B cell (primary cell): ENCODE measurements at regions of chr12 and their contacts with region 1.

Region 1: GRCh38 chr12:14284184-14284722 is 81.2 kb upstream of the ATF7IP start:
- DNase-seq: peak; percentile 51
- ATAC-seq: peak; percentile 40
- H3K4me3 ChIP-seq: peak overlapping the region in 1 of 5 experiments; percentile 25
- H3K4me3 Mint-ChIP-seq: peak overlapping the region; percentile 79
- H3K27ac ChIP-seq: peak overlapping the region; percentile 92 to 95
- H3K27ac Mint-ChIP-seq: peak overlapping the region; percentile 97
- H3K4me1 ChIP-seq: peaks cover 39 to 64% of the 10 kb centered on the region in 2 donors
- H3K4me1 Mint-ChIP-seq: peaks cover 48% of the 10 kb centered on the region
- H3K27me3 ChIP-seq: no peaks in the 10 kb centered on the region
- H3K27me3 Mint-ChIP-seq: no peaks in the 10 kb centered on the region
- CTCF ChIP-seq: no peak

Region 2: GRCh38 chr12:14207905-14208551 is 76.2 kb before region 1 on chr12:
- CTCF ChIA-PET with region 1: no interaction called
- POLR2A ChIA-PET with region 1: interaction called, 10 read pairs
- intact Hi-C with region 1: no loop called
- DNase-seq: no peak
- ATAC-seq: no peak
- H3K4me3 ChIP-seq: no peak overlapping the region
- H3K4me3 Mint-ChIP-seq: no peak overlapping the region
- H3K27ac ChIP-seq: no peak overlapping the region
- H3K27ac Mint-ChIP-seq: no peak overlapping the region
- H3K4me1 ChIP-seq: no peaks in the 10 kb centered on the region
- H3K4me1 Mint-ChIP-seq: no peaks in the 10 kb centered on the region
- H3K27me3 ChIP-seq: no peaks in the 10 kb centered on the region
- H3K27me3 Mint-ChIP-seq: no peaks in the 10 kb centered on the region
- CTCF ChIP-seq: no peak

Region 3: GRCh38 chr12:14225064-14225463 is 59.2 kb before region 1 on chr12:
- CTCF ChIA-PET with region 1: no interaction called
- POLR2A ChIA-PET with region 1: no interaction called
- intact Hi-C with region 1: no loop called
- DNase-seq: no peak
- ATAC-seq: no peak
- H3K4me3 ChIP-seq: no peak overlapping the region
- H3K4me3 Mint-ChIP-seq: no peak overlapping the region
- H3K27ac ChIP-seq: no peak overlapping the region
- H3K27ac Mint-ChIP-seq: no peak overlapping the region
- H3K4me1 ChIP-seq: peaks cover 0 to 5% of the 10 kb centered on the region in 2 donors
- H3K4me1 Mint-ChIP-seq: peaks cover 8% of the 10 kb centered on the region
- H3K27me3 ChIP-seq: no peaks in the 10 kb centered on the region
- H3K27me3 Mint-ChIP-seq: no peaks in the 10 kb centered on the region
- CTCF ChIP-seq: no peak

Region 4: GRCh38 chr12:14249368-14249767 is 34.9 kb before region 1 on chr12:
- CTCF ChIA-PET with region 1: interaction called, 4 read pairs
- POLR2A ChIA-PET with region 1: interaction called, 12 read pairs
- intact Hi-C with region 1: no loop called
- DNase-seq: no peak
- ATAC-seq: no peak
- H3K4me3 ChIP-seq: no peak overlapping the region
- H3K4me3 Mint-ChIP-seq: no peak overlapping the region
- H3K27ac ChIP-seq: no peak overlapping the region
- H3K27ac Mint-ChIP-seq: no peak overlapping the region
- H3K4me1 ChIP-seq: peaks cover 18 to 28% of the 10 kb centered on the region in 2 donors
- H3K4me1 Mint-ChIP-seq: peaks cover 25% of the 10 kb centered on the region
- H3K27me3 ChIP-seq: no peaks in the 10 kb centered on the region
- H3K27me3 Mint-ChIP-seq: no peaks in the 10 kb centered on the region
- CTCF ChIP-seq: no peak

Region 5: GRCh38 chr12:14272956-14273907 is 11.0 kb before region 1 on chr12:
- CTCF ChIA-PET with region 1: interaction called, 18 read pairs
- POLR2A ChIA-PET with region 1: interaction called, 5 read pairs
- intact Hi-C with region 1: no loop called
- DNase-seq: peak; percentile 50
- ATAC-seq: peak; percentile 60
- H3K4me3 ChIP-seq: peak overlapping the region in 1 of 5 experiments; percentile 0
- H3K4me3 Mint-ChIP-seq: peak overlapping the region; percentile 46
- H3K27ac ChIP-seq: peak overlapping the region; percentile 55 to 65
- H3K27ac Mint-ChIP-seq: peak overlapping the region; percentile 78
- H3K4me1 ChIP-seq: peaks cover 40 to 49% of the 10 kb centered on the region in 2 donors
- H3K4me1 Mint-ChIP-seq: peaks cover 45% of the 10 kb centered on the region
- H3K27me3 ChIP-seq: no peaks in the 10 kb centered on the region
- H3K27me3 Mint-ChIP-seq: no peaks in the 10 kb centered on the region
- CTCF ChIP-seq: no peak